ENCODE measurements at regions of chr19 and their contacts with region 1.

Region 1: GRCh38 chr19:12696366-12697335 is at the start of gene FBXW9:
- DNase-seq: peak; percentile 91 to 98 (median 96)
- ATAC-seq: peak; percentile 90 to 95 (median 92)
- H3K4me3 ChIP-seq: peak within 1 kb of the TSS; percentile 70 to 83
- H3K4me3 Mint-ChIP-seq: peak within 1 kb of the TSS; percentile 84 to 90 (median 89)
- H3K27ac ChIP-seq: peak within 1 kb of the TSS; percentile 90
- H3K27ac Mint-ChIP-seq: peak within 1 kb of the TSS; percentile 93 to 94
- H3K4me1 ChIP-seq: peaks cover 6 to 26% of the 10 kb centered on the region in 2 experiments
- H3K4me1 Mint-ChIP-seq: peaks cover 0 to 14% (median 11%) of the 10 kb centered on the region in 3 donors
- H3K27me3 ChIP-seq: no peaks in the 10 kb centered on the region
- H3K27me3 Mint-ChIP-seq: no peaks in the 10 kb centered on the region
- total RNA-seq, gene FBXW9: 3.4 to 6.2 (median 4.7) TPM

Region 2: GRCh38 chr19:11987405-11988281 is 709.0 kb before region 1 on chr19:
- CTCF ChIA-PET with region 1: no interaction called
- POLR2A ChIA-PET with region 1: no interaction called
- DNase-seq: peak; percentile 78 to 95 (median 90)
- ATAC-seq: peak; percentile 89 to 94 (median 94)
- H3K4me3 ChIP-seq: peak overlapping the region; percentile 91 to 96
- H3K4me3 Mint-ChIP-seq: peak overlapping the region; percentile 93 to 99 (median 97)
- H3K27ac ChIP-seq: peak overlapping the region; percentile 84
- H3K27ac Mint-ChIP-seq: peak overlapping the region; percentile 94 to 97
- H3K4me1 ChIP-seq: peaks cover 6 to 21% of the 10 kb centered on the region in 2 experiments
- H3K4me1 Mint-ChIP-seq: peaks cover 27 to 38% (median 34%) of the 10 kb centered on the region in 3 donors
- H3K27me3 ChIP-seq: no peaks in the 10 kb centered on the region
- H3K27me3 Mint-ChIP-seq: no peaks in the 10 kb centered on the region

Region 3: DNA sequence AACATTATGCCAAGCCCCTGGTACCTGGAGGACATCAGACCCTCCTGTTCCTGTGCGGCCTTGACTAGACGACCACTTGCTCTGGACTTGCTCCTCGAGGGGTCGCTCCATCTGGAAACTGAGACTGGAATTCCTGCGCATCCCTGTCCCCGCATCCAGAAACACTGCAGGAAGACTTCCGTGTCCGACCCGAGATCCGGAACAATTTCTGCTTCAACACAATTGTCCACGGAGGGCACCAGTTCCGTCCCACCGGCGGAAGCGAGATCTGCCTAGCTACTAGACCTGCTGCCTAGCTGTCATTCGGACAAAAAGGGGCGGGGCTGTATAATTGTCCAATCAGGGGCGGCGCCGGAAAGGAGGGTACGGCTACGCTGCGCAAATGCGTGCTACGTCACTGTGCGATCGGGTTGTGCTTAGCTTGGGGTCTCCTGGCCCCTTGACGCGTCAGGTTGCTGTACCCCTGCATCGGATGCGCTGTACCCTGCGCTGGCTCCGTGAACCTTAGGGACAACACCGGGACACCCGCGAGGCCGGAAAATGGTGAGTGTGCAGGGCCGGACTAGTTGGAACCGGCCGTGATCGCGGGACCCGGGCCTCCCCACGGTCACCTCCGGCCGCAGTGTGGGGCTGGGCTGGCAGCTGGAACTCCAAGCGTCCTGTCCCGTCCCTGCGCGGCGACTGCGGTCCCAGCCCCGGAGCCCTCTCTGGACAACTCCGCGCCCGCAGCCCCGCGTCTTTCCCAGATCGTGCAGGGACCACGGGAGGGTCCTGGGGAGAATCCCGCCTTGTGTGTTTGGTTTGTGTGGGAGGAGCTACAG is 85.9 kb before region 1 on chr19 and contains the starts of genes ZNF490 and ZNF791:
- CTCF ChIA-PET with region 1: no interaction called
- POLR2A ChIA-PET with region 1: no interaction called
- DNase-seq: peak; percentile 88 to 99 (median 96)
- ATAC-seq: peak; percentile 85 to 95 (median 92)
- H3K4me3 ChIP-seq: peak within 1 kb of the TSS; percentile 98 to 100
- H3K4me3 Mint-ChIP-seq: peak within 1 kb of the TSS; percentile 99 to 100 (median 99)
- H3K27ac ChIP-seq: peak within 1 kb of the TSS; percentile 95
- H3K27ac Mint-ChIP-seq: peak within 1 kb of the TSS; percentile 98 to 99
- H3K4me1 ChIP-seq: peaks cover 20 to 56% of the 10 kb centered on the region in 2 experiments
- H3K4me1 Mint-ChIP-seq: peaks cover 43 to 50% (median 48%) of the 10 kb centered on the region in 3 donors
- H3K27me3 ChIP-seq: no peaks in the 10 kb centered on the region
- H3K27me3 Mint-ChIP-seq: no peaks in the 10 kb centered on the region
- total RNA-seq, gene ZNF490: 11.8 to 14.0 (median 12.4) TPM
- total RNA-seq, gene ZNF791: 33.4 to 54.6 (median 43.9) TPM

Region 4: DNA sequence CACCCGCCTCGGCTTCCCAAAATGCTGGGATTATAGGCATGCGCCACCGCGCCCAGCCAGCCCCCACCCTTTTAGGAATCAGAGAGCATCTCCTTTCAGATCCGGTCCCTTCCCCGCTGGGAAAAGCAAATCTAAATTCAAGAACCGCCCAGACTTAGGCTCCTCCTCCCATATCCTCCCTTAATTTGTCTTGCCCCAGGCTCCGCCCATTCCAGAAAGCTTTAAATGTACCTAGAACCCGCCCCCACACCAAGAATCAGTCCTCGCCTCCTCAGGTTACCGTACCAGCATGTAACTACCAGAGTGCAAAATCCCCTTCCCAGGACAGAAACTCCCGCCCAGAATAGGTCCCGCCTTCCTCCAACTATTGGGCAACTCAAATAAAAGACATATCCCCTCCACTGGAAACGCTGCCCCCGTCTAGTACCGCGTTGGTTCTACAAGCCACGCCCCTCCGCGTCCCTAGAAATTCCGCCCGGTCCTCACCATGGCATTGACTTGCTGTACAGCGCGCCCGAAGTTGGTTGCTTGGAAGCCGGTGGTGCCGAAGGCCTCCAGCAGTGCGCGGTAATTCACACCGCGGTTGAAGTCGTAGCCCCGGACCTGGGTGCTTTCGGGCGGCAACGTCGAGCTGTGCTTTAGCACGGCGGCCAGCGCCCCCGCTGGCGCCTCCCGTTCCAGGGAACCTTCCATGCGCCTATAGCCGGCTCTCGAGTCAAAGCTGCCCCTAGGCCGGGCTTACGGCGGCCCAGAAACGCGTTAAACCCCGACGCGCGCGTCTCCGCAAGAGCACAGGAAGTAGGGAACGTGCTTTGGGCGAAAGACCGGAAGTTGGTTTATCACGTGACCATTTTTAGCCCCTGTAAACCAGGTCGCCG is 15.3 kb before region 1 on chr19 and contains the start of gene DHPS:
- CTCF ChIA-PET with region 1: interaction called, 5 to 8 read pairs
- POLR2A ChIA-PET with region 1: interaction called, 4 to 16 read pairs
- DNase-seq: peak; percentile 64 to 99 (median 90)
- ATAC-seq: peak; percentile 81 to 85 (median 84)
- H3K4me3 ChIP-seq: peak within 1 kb of the TSS; percentile 76 to 89
- H3K4me3 Mint-ChIP-seq: peak within 1 kb of the TSS; percentile 88 to 98 (median 92)
- H3K27ac ChIP-seq: peak within 1 kb of the TSS; percentile 92
- H3K27ac Mint-ChIP-seq: peak within 1 kb of the TSS; percentile 93 to 97
- H3K4me1 ChIP-seq: peaks cover 0 to 39% of the 10 kb centered on the region in 2 experiments
- H3K4me1 Mint-ChIP-seq: peaks cover 27 to 29% (median 28%) of the 10 kb centered on the region in 3 donors
- H3K27me3 ChIP-seq: no peaks in the 10 kb centered on the region
- H3K27me3 Mint-ChIP-seq: no peaks in the 10 kb centered on the region
- total RNA-seq, gene DHPS: 141 to 195 (median 177) TPM

Measured in T-cell (primary cell).